CD4-positive, alpha-beta T cell (primary cell): ENCODE measurements at regions of chr4 and their contacts with region 1.

Region 1: DNA sequence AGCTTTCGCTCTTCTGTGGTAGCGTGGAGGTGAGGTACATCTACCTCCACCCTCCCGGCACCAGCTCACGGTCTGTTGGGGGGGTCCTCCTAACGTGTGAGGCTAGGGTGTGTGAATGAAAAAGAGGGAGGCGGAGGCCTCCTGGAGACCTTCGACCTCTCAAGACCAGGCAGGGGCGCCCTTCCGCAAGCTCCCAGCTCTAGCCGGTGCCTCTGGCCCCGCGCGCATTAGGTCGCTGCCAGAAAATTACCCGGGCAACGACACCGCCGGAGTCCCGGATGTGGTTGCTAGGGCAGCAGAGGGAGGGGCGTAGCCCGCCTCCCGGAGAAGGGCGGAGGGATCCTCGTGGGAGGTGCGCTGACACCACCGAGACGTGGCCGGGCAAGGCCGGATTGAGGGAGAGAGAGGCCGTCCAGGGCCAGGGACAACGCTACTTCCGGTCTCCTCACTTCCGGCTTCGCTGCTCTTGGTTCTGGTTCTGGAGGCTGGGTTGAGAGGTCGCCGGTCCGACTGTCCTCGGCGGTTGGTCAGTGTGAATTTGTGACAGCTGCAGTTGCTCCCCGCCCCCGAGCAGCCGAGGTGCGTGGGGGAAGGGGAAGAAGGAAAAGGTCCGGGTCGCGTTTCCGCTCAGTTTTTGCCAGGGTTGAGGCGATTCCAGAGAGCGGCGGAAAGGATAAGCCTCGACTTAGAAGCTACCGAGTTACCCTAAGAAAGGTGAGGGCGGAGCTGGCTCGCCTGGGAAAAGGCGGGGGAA is at the starts of genes ARFIP1 and TIGD4:
- DNase-seq: peak; percentile 84 to 96 (median 92)
- ATAC-seq: peak; percentile 84
- H3K4me3 ChIP-seq: peak within 1 kb of the TSS; percentile 72
- H3K4me3 Mint-ChIP-seq: peak within 1 kb of the TSS; percentile 90
- H3K27ac ChIP-seq: peak within 1 kb of the TSS; percentile 75 to 79
- H3K27ac Mint-ChIP-seq: peak within 1 kb of the TSS; percentile 95
- H3K4me1 ChIP-seq: peaks cover 21% of the 10 kb centered on the region
- H3K4me1 Mint-ChIP-seq: peaks cover 50% of the 10 kb centered on the region
- H3K27me3 ChIP-seq: no peaks in the 10 kb centered on the region
- H3K27me3 Mint-ChIP-seq: peaks cover 11% of the 10 kb centered on the region
- CTCF ChIP-seq: no peak
- total RNA-seq, gene ARFIP1: 2.6 to 3.0 TPM
- total RNA-seq, gene TIGD4: 0.22 TPM in 1 of 2 experiments, not detected in the other

Region 2: DNA sequence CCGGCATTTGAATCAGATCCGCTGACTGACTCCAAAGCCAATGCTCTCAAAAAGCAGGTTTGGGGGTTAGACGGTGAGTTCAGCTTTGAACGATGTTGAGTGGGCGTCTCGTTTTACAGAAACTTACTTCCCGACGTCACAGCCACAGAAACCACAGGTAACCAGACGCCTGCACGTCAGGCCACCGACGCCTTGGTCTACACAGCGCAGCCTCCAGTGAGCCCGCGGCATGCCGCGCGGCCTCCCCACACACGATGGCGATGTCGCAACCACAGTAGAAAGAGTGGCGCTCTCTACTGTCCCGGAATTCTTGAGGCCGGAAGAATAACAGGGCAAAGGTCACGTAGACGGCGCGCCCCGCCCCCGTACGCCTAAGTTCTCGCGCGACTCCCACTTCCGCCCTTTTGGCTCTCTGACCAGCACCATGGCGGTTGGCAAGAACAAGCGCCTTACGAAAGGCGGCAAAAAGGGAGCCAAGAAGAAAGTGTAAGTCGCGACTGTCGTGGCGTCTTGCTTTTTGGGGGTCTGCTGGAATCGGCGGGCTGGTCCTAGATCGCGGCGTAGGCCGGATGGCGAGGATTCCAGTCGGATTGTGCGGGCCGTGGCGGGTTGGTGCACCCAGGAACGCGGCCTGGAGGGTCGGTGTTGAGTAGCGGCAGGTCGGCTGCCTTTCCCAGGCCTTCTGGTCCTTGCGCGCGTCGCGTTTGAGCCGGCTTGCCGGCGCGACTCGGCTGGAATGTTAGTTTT is 1680.3 kb before region 1 on chr4 and contains the start of gene RPS3A:
- CTCF ChIA-PET with region 1: interaction called, 6 read pairs
- POLR2A ChIA-PET with region 1: interaction called, 7 read pairs
- intact Hi-C with region 1: loop called in 1 of 2 experiments (anchors 2 kb)
- DNase-seq: peak; percentile 96 to 99 (median 98)
- ATAC-seq: peak; percentile 83
- H3K4me3 ChIP-seq: peak within 1 kb of the TSS; percentile 74
- H3K4me3 Mint-ChIP-seq: peak within 1 kb of the TSS; percentile 87
- H3K27ac ChIP-seq: peak within 1 kb of the TSS; percentile 82 to 97
- H3K27ac Mint-ChIP-seq: peak within 1 kb of the TSS; percentile 88
- H3K4me1 ChIP-seq: peaks cover 26% of the 10 kb centered on the region
- H3K4me1 Mint-ChIP-seq: peaks cover 36% of the 10 kb centered on the region
- H3K27me3 ChIP-seq: no peaks in the 10 kb centered on the region
- H3K27me3 Mint-ChIP-seq: no peaks in the 10 kb centered on the region
- CTCF ChIP-seq: peak; percentile 91
- total RNA-seq, gene RPS3A: 3,925 to 4,071 TPM

Region 3: DNA sequence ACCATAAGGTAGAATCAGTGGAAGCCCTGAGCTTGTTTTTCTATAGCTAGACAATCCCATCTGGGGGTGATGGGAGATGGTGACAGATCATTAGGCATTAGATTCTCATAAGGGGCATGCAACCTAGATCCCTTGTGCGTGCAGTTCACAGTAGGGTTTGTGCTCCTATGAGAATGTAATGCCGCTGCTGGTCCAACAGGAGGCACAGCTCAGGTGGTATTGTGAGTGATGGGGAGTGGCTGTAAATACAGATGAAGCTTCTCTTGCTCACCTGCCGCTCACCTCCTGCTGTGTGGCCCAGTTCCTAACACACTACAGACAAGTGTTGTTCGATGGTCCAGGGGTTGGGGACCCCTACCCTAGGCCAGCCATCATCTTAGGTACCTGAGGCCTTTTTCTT is 1013.0 kb before region 1 on chr4:
- CTCF ChIA-PET with region 1: no interaction called
- POLR2A ChIA-PET with region 1: no interaction called
- intact Hi-C with region 1: loop called in 1 of 2 experiments (anchors 5 kb)
- DNase-seq: peak in 8 of 14 experiments; percentile 1 to 48 (median 5)
- ATAC-seq: peak; percentile 55
- H3K4me3 ChIP-seq: no peak overlapping the region
- H3K4me3 Mint-ChIP-seq: no peak overlapping the region
- H3K27ac ChIP-seq: no peak overlapping the region
- H3K27ac Mint-ChIP-seq: no peak overlapping the region
- H3K4me1 ChIP-seq: no peaks in the 10 kb centered on the region
- H3K4me1 Mint-ChIP-seq: peaks cover under 1% of the 10 kb centered on the region
- H3K27me3 ChIP-seq: no peaks in the 10 kb centered on the region
- H3K27me3 Mint-ChIP-seq: peaks cover 12% of the 10 kb centered on the region
- CTCF ChIP-seq: no peak

Region 4: GRCh38 chr4:152747444-152747843 is 32.2 kb before region 1 on chr4:
- CTCF ChIA-PET with region 1: no interaction called
- POLR2A ChIA-PET with region 1: no interaction called
- intact Hi-C with region 1: no loop called
- DNase-seq: no peak
- ATAC-seq: no peak
- H3K4me3 ChIP-seq: no peak overlapping the region
- H3K4me3 Mint-ChIP-seq: no peak overlapping the region
- H3K27ac ChIP-seq: no peak overlapping the region
- H3K27ac Mint-ChIP-seq: no peak overlapping the region
- H3K4me1 ChIP-seq: no peaks in the 10 kb centered on the region
- H3K4me1 Mint-ChIP-seq: no peaks in the 10 kb centered on the region
- H3K27me3 ChIP-seq: no peaks in the 10 kb centered on the region
- H3K27me3 Mint-ChIP-seq: no peaks in the 10 kb centered on the region
- CTCF ChIP-seq: no peak

Region 5: DNA sequence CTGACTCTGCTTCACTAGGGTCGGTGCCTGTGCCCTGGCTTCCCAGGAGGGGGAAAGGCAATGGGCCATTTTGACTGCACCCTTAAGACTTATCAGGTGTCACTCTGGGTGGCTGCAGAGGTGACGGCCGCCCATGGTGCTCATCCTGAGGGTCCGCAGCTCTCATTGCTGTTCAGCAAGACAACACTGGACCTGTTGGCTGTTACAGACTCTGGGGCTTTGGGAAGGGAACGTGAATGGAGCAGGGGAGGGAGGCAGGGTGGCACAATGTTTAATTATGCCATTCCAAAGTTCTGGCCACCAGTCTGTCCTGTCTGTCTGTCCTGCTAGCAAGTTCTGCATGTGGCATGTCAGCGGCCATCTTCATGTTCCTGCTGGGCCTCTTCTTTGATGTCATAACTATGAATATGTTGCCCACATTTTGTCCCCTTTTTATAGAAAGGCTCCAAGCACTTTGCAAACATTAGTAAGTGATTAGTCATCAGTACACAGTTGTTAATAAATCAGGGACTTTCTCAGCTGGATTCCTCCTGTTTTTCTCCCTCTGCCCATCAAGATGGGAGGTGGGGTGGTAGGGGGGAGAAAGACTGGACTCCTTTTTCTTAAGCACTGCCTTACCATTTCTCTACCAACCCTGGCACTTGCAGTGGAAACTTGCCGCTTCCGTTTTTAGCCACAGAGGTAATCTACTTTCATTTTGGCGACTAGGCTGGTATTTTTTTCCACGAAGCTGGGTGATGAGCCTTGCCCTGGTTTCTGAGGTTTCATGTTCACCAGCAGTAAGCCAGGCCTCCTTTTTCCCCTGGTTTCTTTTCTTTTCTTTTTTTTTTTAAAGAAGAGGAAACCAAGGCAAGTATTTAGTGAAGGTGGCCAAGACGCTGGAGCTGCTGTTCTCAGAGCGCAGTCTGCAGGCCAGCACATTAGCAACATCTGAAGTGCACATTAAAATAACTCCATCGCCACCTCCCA is 335.9 kb after region 1 on chr4:
- CTCF ChIA-PET with region 1: no interaction called
- POLR2A ChIA-PET with region 1: interaction called, 7 read pairs
- intact Hi-C with region 1: loop called in 1 of 2 experiments (anchors 5 kb)
- DNase-seq: peak; percentile 43 to 92 (median 62)
- ATAC-seq: peak; percentile 54
- H3K4me3 ChIP-seq: peak overlapping the region; percentile 20
- H3K4me3 Mint-ChIP-seq: no peak overlapping the region
- H3K27ac ChIP-seq: peak overlapping the region; percentile 66
- H3K27ac Mint-ChIP-seq: no peak overlapping the region
- H3K4me1 ChIP-seq: peaks cover 66% of the 10 kb centered on the region
- H3K4me1 Mint-ChIP-seq: peaks cover 15% of the 10 kb centered on the region
- H3K27me3 ChIP-seq: no peaks in the 10 kb centered on the region
- H3K27me3 Mint-ChIP-seq: no peaks in the 10 kb centered on the region
- CTCF ChIP-seq: no peak

Region 6: DNA sequence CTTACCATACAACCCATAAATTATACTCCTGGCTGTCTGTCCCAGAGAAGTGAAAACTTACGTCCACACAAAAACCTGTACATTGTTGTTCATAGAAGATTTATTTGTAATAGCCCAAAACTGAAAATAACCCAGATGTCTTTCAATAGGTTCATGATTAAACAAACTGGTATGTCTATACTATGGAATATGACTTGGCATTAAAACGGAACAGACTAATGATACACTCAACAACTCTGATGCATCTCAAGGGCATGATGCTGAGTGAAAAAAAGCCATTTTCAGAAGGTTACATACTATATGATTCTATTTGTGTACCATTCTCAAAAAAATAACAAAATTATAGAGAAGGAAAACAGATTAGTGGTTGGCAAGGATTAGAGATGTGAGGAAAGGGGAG is 553.2 kb after region 1 on chr4:
- CTCF ChIA-PET with region 1: no interaction called
- POLR2A ChIA-PET with region 1: no interaction called
- intact Hi-C with region 1: no loop called
- DNase-seq: no peak
- ATAC-seq: no peak
- H3K4me3 ChIP-seq: no peak overlapping the region
- H3K4me3 Mint-ChIP-seq: no peak overlapping the region
- H3K27ac ChIP-seq: no peak overlapping the region
- H3K27ac Mint-ChIP-seq: no peak overlapping the region
- H3K4me1 ChIP-seq: no peaks in the 10 kb centered on the region
- H3K4me1 Mint-ChIP-seq: no peaks in the 10 kb centered on the region
- H3K27me3 ChIP-seq: no peaks in the 10 kb centered on the region
- H3K27me3 Mint-ChIP-seq: no peaks in the 10 kb centered on the region
- CTCF ChIP-seq: no peak

Region 7: GRCh38 chr4:153344131-153345010 is 564.7 kb after region 1 on chr4 and contains the start of gene MND1:
- CTCF ChIA-PET with region 1: no interaction called
- POLR2A ChIA-PET with region 1: no interaction called
- intact Hi-C with region 1: no loop called
- DNase-seq: peak; percentile 85 to 94 (median 90)
- ATAC-seq: peak; percentile 92
- H3K4me3 ChIP-seq: peak within 1 kb of the TSS; percentile 80
- H3K4me3 Mint-ChIP-seq: peak within 1 kb of the TSS; percentile 93
- H3K27ac ChIP-seq: no peak within 1 kb of the TSS
- H3K27ac Mint-ChIP-seq: peak within 1 kb of the TSS; percentile 57
- H3K4me1 ChIP-seq: peaks cover 4% of the 10 kb centered on the region
- H3K4me1 Mint-ChIP-seq: peaks cover 13% of the 10 kb centered on the region
- H3K27me3 ChIP-seq: no peaks in the 10 kb centered on the region
- H3K27me3 Mint-ChIP-seq: peaks cover 7% of the 10 kb centered on the region
- CTCF ChIP-seq: peak; percentile 98
- total RNA-seq, gene MND1: 0.42 TPM in 1 of 2 experiments, not detected in the other